ENCODE measurements at regions of chr13 and their contacts with region 1.

Region 1: DNA sequence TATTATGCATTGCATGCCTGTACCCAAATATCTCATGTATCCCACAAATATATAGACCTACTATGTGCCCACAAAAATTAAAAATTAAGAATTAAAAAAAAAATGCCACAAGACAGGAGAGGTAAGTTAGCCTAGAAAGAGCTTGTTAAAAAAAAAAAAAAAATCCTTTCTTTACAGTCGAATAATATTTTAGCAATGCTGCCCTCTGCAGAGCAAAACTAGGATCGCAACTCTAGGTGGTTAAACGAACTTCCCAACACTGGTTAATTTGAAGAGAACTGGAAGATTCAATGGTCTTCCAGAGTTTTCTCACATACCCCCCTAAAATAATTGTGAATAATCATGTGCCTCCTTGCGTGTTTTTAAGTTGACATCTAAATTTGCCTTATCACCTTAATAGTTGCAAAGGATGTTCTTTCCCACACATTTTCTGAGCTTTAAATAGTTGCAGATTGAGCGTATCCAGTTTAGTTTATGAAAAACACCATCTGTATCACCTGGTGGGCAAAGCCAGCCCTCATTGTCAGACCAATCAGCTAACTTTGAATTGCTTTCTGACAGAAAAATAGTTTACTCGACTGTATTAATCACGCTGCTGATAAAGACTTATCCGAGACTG is 47.4 kb upstream of the RCBTB2 start:
- DNase-seq: peak; percentile 82
- H3K4me3 Mint-ChIP-seq: no peak overlapping the region
- H3K27ac Mint-ChIP-seq: no peak overlapping the region
- H3K4me1 Mint-ChIP-seq: peaks cover 42% of the 10 kb centered on the region
- H3K27me3 Mint-ChIP-seq: peaks cover 45% of the 10 kb centered on the region

Region 2: DNA sequence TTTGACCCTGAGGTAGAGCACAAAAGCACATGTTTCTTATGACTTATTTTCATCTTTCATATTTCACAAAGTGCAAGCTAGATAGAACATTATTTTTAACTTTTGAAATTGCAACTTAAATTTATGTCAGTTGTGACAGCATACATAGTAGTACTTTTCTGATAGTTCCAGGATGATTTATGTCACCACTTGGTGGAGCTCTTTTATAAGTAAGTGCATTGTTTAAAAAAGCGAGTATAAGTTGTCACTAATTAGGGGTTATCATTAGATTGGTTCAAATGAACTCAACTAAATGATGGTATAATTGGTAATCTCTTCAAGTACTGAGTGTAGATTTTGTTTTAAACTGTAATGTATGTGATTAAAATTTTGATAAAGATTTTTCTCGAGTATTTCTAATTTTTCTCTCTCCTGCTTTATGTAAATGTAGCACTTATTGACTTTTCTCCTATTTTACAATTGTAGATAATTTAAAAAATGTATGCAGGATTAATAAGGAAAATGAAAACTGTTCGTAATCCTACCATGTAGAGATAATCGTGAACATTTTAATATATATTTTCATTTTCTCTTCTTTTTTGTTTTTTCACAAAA is 245.7 kb before region 1 on chr13:
- CTCF ChIA-PET with region 1: interaction called, 106 read pairs
- DNase-seq: no peak
- H3K4me3 Mint-ChIP-seq: no peak overlapping the region
- H3K27ac Mint-ChIP-seq: no peak overlapping the region
- H3K4me1 Mint-ChIP-seq: peaks cover 26% of the 10 kb centered on the region
- H3K27me3 Mint-ChIP-seq: no peaks in the 10 kb centered on the region

Region 3: GRCh38 chr13:48492470-48493065 is 87.7 kb before region 1 on chr13:
- CTCF ChIA-PET with region 1: interaction called, 12 read pairs
- DNase-seq: peak; percentile 87
- H3K4me3 Mint-ChIP-seq: no peak overlapping the region
- H3K27ac Mint-ChIP-seq: no peak overlapping the region
- H3K4me1 Mint-ChIP-seq: peaks cover 69% of the 10 kb centered on the region
- H3K27me3 Mint-ChIP-seq: no peaks in the 10 kb centered on the region

Region 4: DNA sequence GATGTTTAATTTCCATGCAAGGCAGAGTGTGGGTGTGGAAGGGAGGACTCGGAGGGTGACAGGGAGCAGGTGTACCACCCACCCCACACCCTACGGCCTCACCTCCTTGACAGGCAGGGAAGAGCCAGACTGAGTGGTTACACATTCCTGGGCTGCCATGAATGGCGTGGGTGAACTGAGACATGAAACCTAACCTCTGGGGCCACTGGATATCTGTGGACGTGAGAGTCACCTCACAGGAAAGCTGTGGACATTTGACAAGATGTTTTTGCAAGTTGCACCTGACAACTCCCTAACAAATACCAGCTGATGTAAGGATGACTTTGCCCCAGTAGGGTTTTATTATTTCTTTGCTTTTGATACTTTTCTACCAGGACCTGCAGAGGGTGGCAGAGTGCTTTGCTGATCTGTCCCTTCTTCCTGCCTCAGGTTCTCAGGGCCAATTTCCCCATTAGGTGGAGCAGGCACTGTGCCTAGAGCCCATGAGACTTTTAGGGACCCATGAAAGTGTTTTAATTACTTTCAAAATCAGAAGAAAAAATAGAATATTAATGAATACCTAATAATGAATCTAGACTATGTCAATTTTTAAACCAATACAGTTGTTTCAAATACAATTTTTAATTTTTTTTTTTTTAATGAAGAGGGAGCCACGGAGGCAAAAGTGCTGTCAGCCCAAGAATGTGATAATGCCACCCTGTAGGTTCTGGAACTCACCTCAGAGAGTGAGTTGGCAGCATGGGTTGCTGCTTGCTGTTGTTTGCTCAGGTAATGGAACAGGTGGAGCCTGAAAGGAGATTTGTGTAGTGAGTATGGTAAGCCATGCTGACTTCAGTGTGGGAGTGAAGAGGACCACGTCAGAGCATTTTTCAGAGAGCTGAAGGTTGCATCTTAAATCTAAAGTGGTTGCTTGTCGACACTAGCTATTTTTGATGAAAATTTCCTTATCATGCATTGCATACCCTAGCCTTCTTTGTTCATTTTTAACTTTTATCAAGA is 15.4 kb after region 1 on chr13:
- CTCF ChIA-PET with region 1: interaction called, 10 read pairs
- DNase-seq: peak; percentile 75
- H3K4me3 Mint-ChIP-seq: no peak overlapping the region
- H3K27ac Mint-ChIP-seq: no peak overlapping the region
- H3K4me1 Mint-ChIP-seq: no peaks in the 10 kb centered on the region
- H3K27me3 Mint-ChIP-seq: peaks cover 20% of the 10 kb centered on the region

Measured in activated naive CD4-positive, alpha-beta T cell treated with anti-CD3 and anti-CD28 coated beads, Interleukin-2, amount 10 ng/mL, durations not matched to agents 7 days and 5 days (primary cell).